Activated T-helper 1 cell treated with anti-CD3 and anti-CD28 coated beads, Interleukin-12 subunit alpha, Interleukin-12 subunit beta, Interleukin-2, Interleukin-4 antibody, amounts not matched to agents 30 ng/mL and 10 ng/mL and 1 ng/mL, durations not matched to agents 14 hours and 24 hours and 36 hours (primary cell): ENCODE measurements at regions of chr6 and their contacts with region 1.

Region 1: DNA sequence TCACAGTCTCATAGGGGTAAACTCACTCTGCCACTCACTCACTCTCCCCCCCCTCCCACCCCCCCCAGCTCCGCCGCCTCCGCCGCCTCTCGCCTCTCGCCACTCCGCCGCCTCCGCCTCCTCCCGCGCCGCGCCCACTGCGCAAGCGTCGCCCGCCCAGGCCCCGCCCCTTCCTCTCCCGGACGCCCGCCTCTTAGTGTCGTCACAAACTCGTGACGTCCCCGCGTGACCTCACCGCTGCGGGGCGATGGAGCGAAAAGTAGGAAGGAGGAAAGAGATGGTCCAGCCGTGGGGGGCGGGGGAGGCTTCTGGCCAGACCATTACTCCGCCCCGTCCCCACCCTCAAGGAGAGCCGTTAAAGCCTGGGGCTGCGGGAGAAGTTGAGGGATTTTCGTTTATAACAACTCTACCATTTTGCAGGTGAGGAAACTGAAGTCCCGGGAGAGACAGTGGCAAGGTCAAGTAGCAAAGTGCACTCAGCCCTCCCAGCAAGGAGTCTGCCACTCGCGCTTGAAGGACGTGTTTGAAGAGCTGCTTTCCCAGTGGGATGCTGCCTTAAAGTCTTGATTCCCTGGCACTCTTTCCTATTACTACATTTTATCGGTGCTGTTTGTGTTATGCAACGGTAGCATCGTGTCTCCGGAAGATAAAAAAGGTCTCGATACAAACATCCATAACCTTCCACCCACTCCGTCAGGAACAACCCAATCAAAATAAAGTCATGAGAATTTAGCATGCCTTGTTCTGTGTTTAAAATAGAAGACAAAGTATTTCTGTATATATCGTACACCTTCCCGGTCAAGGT is at the start of gene ILRUN:
- DNase-seq: peak; percentile 93
- H3K4me3 Mint-ChIP-seq: peak within 1 kb of the TSS; percentile 92
- H3K27ac Mint-ChIP-seq: peak within 1 kb of the TSS; percentile 98
- H3K4me1 Mint-ChIP-seq: peaks cover 39% of the 10 kb centered on the region
- H3K27me3 Mint-ChIP-seq: peaks cover 4% of the 10 kb centered on the region
- total RNA-seq, gene ILRUN: 62.7 and 64.4 TPM in 2 replicates

Region 2: GRCh38 chr6:34476447-34476846 is 220.5 kb before region 1 on chr6:
- intact Hi-C with region 1: no loop called
- DNase-seq: no peak
- H3K4me3 Mint-ChIP-seq: no peak overlapping the region
- H3K27ac Mint-ChIP-seq: no peak overlapping the region
- H3K4me1 Mint-ChIP-seq: no peaks in the 10 kb centered on the region
- H3K27me3 Mint-ChIP-seq: peaks cover 5% of the 10 kb centered on the region

Region 3: GRCh38 chr6:34630040-34630439 is 66.9 kb before region 1 on chr6:
- intact Hi-C with region 1: no loop called
- DNase-seq: no peak
- H3K4me3 Mint-ChIP-seq: no peak overlapping the region
- H3K27ac Mint-ChIP-seq: no peak overlapping the region
- H3K4me1 Mint-ChIP-seq: peaks cover 18% of the 10 kb centered on the region
- H3K27me3 Mint-ChIP-seq: no peaks in the 10 kb centered on the region

Region 4: DNA sequence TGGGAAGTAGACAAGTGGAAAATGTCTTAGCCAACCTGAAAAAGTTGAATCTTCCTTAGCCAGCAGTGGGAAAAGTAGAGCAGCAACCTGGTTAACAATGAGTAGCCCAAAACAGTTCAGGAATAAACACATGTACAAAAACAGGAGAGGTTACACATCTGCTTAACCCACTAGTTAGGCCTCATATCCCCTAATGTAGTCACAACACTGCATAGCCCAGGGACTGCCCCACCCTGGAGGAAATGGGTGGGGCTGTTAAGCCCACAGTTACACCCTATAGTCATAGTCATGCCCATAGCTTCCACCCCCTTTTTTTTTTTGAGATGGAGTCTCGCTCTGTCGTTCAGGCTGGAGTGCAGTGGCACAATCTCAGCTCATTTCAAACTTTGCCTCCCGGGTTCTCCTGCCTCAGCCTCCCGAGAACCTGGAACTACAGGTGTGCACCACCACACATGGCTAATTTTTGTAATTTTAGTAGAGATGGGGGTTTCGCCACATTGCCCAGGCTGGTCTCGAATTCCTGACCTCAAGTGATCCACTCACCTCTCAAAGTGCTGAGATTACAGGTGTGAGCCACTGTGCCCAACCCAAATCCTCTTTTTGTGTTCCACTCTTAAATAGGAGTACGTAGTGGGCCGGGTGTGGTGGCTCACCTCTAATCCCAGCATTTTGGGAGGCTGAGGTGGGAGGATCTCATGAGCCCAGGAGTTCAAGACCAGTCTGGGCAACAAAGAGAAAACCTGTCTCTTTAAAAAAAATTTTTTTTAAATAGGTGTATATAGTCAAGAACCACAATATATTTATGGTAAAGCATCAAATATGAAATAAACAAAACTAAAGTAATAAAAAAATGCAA is 24.9 kb before region 1 on chr6:
- intact Hi-C with region 1: loop called (anchors 1 kb)
- DNase-seq: peak; percentile 80
- H3K4me3 Mint-ChIP-seq: peak overlapping the region; percentile 69
- H3K27ac Mint-ChIP-seq: peak overlapping the region; percentile 97
- H3K4me1 Mint-ChIP-seq: peaks cover 63% of the 10 kb centered on the region
- H3K27me3 Mint-ChIP-seq: no peaks in the 10 kb centered on the region

Region 5: GRCh38 chr6:34791701-34792235 is 94.8 kb after region 1 on chr6 and contains the start of gene BLTP3A:
- intact Hi-C with region 1: loop called (anchors 2 kb)
- DNase-seq: peak; percentile 76
- H3K4me3 Mint-ChIP-seq: peak within 1 kb of the TSS; percentile 99
- H3K27ac Mint-ChIP-seq: peak within 1 kb of the TSS; percentile 97
- H3K4me1 Mint-ChIP-seq: peaks cover 29% of the 10 kb centered on the region
- H3K27me3 Mint-ChIP-seq: no peaks in the 10 kb centered on the region
- total RNA-seq, gene BLTP3A: 17.2 and 17.8 TPM in 2 replicates